ENCODE measurements at regions of chr19 and their contacts with region 1.

Region 1: GRCh38 chr19:9140159-9140874 is at the start of gene ZNF317:
- DNase-seq: peak; percentile 92 to 96 (median 94)
- ATAC-seq: peak; percentile 93 to 99 (median 98)
- H3K4me3 ChIP-seq: peak within 1 kb of the TSS; percentile 62 to 96 (median 80)
- H3K27ac ChIP-seq: peak within 1 kb of the TSS; percentile 54 to 94 (median 84)
- H3K4me1 ChIP-seq: peaks cover 0 to 27% (median 15%) of the 10 kb centered on the region in 12 donors
- H3K27me3 ChIP-seq: no peaks in the 10 kb centered on the region
- CTCF ChIP-seq: peak in 1 of 12 donors; percentile 17
- POLR2A ChIP-seq: peak in 1 of 2 donors; percentile 70
- total RNA-seq, gene ZNF317: 8.4 to 21.6 (median 13.5) TPM

Region 2: DNA sequence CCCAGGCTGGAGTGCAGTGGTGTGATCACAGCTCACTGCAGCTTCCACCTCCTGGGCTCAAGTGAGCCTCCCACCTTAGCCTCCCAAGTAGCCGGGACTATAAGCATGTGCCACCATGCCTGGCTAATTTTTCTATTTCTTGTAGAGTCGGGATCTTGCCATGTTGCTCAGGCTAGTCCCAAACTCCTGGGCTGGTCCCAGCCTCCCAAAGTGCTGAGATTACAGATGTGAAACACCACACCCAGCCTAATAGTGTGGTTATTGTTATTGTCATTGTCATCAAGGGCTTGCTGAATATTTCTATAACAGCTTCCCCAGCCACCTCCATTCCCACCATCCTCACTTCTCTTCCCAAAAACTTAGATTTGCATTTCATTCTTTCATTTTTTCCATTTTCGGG is 416.0 kb before region 1 on chr19:
- intact Hi-C with region 1: no loop called
- DNase-seq: no peak
- ATAC-seq: no peak
- H3K4me3 ChIP-seq: no peak overlapping the region
- H3K27ac ChIP-seq: no peak overlapping the region
- H3K4me1 ChIP-seq: no peaks in the 10 kb centered on the region
- H3K27me3 ChIP-seq: peaks cover 0 to 5% (median 0%) of the 10 kb centered on the region in 9 donors
- CTCF ChIP-seq: no peak
- POLR2A ChIP-seq: no peak

Region 3: GRCh38 chr19:9205501-9206113 is 65.3 kb after region 1 on chr19:
- intact Hi-C with region 1: loop called in 1 of 10 experiments (anchors 2 kb)
- DNase-seq: peak; percentile 58 to 82 (median 63)
- ATAC-seq: peak; percentile 69 to 77 (median 75)
- H3K4me3 ChIP-seq: peak overlapping the region in 10 of 12 donors; percentile 20 to 44 (median 40)
- H3K27ac ChIP-seq: no peak overlapping the region
- H3K4me1 ChIP-seq: peaks cover 0 to 5% (median 0%) of the 10 kb centered on the region in 12 donors
- H3K27me3 ChIP-seq: peaks cover 0 to 20% (median 0%) of the 10 kb centered on the region in 9 donors
- CTCF ChIP-seq: peak; percentile 82 to 99 (median 88)
- POLR2A ChIP-seq: no peak

Region 4: DNA sequence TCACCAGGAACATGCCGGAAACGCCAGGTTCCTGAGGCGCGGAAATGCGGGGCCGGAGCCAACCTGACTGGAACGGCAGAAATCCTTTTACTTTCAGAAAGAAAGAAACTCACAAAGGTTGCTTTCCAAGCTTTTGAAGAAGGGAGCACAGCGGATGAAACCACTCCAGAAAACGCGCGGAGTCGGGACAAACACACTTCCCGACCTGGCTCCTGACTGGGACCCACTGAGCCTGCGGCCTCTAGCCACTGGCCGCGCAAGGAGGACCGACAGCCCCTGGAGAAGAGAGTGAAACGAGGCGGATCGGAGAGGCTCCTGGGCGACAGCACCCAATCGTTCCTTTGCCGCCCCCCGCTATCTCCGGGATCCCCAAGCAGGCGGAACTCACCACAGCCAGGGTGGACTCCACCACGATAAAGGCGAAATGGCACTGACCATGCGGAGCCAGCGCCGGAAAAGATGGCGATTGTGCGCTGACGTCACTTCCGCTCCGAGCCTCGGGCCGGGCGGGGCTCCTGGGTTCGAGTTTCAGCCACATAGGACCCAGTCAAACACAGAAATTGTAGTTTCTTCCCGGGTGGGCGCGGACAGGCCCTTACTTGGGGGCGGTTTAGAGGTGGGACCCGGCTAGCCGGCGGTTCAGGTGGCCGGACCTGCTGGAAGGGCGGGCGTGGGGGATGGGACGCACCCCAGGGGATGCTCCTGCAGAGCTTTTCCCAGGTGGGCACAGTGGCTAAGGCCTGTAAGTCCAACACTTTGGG is 443.9 kb after region 1 on chr19 and contains the start of gene ZNF121:
- intact Hi-C with region 1: loop called in 1 of 10 experiments (anchors 5 kb)
- DNase-seq: peak; percentile 87 to 92 (median 90)
- ATAC-seq: peak; percentile 93 to 98 (median 97)
- H3K4me3 ChIP-seq: peak within 1 kb of the TSS; percentile 53 to 98 (median 87)
- H3K27ac ChIP-seq: peak within 1 kb of the TSS; percentile 69 to 95 (median 91)
- H3K4me1 ChIP-seq: peaks cover 0 to 30% (median 19%) of the 10 kb centered on the region in 12 donors
- H3K27me3 ChIP-seq: peaks cover 0 to 14% (median 0%) of the 10 kb centered on the region in 9 donors
- CTCF ChIP-seq: peak in 2 of 12 donors; percentile 10 to 13
- POLR2A ChIP-seq: peak in 1 of 2 donors; percentile 38
- total RNA-seq, gene ZNF121: 15.6 to 25.4 (median 19.1) TPM

Measured in heart left ventricle (tissue), 16 donors.